AG04449 (cell line): ENCODE measurements at regions of chr6 and their contacts with region 1.

Region 1: DNA sequence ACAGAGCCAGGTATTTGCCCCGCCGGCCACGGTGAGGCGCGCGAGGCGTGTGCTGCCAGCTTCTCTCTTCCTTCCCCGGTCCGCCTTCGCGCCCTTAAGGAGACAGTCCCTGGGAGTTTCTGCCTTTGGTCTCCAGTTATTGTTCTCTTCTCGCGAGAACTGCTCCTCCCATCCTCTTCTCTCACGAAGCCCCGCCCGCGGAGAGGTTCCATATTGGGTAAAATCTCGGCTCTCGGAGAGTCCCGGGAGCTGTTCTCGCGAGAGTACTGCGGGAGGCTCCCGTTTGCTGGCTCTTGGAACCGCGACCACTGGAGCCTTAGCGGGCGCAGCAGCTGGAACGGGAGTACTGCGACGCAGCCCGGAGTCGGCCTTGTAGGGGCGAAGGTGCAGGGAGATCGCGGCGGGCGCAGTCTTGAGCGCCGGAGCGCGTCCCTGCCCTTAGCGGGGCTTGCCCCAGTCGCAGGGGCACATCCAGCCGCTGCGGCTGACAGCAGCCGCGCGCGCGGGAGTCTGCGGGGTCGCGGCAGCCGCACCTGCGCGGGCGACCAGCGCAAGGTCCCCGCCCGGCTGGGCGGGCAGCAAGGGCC is at the start of gene MAPK14:
- DNase-seq: peak; percentile 95
- H3K4me3 ChIP-seq: peak within 1 kb of the TSS; percentile 99
- CTCF ChIP-seq: peak; percentile 92

Region 2: DNA sequence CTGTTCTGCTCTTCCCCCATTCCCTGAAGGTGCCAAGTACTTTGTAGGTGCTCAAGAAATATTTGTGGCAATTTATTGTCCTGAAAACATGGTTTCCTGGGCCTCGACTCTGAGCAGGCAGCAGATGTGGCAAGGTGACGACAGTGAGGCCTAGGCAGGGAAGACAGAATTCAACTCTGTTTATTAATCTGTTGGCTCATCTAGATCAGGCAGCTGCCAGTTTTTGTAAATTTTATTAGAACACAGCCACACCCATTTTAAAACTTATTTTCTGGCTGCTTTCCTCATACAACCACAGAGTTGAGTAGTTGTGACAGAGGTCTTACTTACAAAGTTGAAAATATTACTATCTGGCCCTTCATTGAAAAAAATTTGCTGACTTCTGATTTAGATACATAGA is 24.5 kb after region 1 on chr6:
- CTCF ChIA-PET with region 1: interaction called, 13 read pairs
- POLR2A ChIA-PET with region 1: no interaction called
- DNase-seq: no peak
- H3K4me3 ChIP-seq: no peak overlapping the region
- CTCF ChIP-seq: no peak

Region 3: DNA sequence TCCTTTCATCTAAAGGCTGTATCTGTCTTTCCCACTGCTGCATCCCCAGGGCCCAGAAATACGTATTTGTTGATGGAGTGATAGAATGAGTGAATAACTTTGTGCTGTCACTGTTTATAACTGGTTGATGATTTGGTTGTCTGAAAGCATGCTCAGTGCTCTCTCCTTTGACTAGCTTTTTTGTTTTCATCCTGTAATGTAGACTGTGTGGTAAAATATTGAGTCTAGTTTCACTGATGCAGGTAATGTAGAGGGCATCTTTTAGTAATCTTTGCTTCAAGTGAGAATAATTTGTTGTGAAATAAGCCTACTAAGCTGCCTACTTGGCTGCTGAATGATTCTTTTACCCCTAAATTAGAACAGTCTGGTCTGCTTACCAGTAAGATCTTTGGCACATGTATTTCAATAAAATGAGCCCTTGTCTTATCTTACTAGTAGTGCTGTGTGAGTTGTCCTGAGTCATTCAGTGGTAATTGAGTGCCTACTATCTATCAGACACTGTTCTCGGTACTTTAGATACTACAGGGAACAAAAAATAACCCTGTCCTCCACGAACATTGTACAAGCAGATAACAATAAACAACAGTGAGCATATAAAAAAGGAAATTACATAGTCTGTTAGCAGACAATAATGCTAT is 39.9 kb after region 1 on chr6:
- CTCF ChIA-PET with region 1: interaction called, 14 read pairs
- POLR2A ChIA-PET with region 1: interaction called, 4 read pairs
- DNase-seq: no peak
- H3K4me3 ChIP-seq: no peak overlapping the region
- CTCF ChIP-seq: no peak

Region 4: DNA sequence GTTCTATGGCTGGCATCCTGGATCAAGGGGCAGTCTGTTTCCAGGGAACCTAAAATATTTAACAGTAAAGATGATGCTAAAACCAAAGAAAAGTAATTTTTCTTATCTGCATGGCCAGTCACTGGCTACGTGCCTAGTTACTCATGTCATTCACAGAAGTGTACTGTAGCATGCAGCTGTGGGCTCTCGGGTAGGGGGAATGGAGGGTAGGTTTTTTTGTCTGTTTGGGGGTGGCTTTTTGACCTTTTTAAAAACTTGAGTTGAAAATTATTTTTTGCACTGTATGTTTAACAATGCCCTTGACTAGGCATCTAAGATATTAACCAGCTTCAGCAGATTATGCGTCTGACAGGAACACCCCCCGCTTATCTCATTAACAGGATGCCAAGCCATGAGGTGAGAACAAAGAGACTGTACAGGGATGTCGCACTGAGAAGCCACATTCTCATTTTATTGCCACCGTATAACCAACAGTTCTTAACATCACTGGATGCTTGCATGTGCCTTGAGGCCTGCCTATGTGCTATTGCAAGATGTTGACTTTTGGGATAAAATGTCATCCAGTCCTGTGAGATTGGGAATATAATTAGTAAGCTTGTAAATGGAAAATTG is 72.4 kb after region 1 on chr6:
- CTCF ChIA-PET with region 1: interaction called, 210 read pairs
- POLR2A ChIA-PET with region 1: interaction called, 3 read pairs
- DNase-seq: no peak
- H3K4me3 ChIP-seq: no peak overlapping the region
- CTCF ChIP-seq: no peak

Region 5: DNA sequence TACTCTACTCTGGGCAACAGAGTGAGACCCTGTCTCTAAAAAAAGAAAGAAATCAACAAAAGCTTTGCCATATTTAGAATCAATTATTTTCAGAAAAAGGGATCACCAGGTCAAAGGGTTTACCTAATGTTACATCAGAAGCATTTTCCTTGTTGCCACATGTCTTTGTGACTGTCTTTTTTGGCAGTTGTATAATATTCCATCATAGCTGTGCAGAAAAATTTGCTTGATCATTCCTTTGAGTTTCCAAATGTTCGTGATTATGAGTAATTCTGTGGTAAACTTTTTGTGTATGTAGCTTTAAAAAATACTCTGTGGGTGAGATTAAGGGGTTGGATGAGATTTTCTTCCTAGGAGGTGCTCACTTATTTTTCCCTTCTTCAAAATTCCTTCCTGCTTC is 268.6 kb after region 1 on chr6:
- CTCF ChIA-PET with region 1: no interaction called
- POLR2A ChIA-PET with region 1: no interaction called
- DNase-seq: no peak
- H3K4me3 ChIP-seq: no peak overlapping the region
- CTCF ChIP-seq: no peak

Region 6: GRCh38 chr6:36360241-36361054 is 332.9 kb after region 1 on chr6:
- CTCF ChIA-PET with region 1: interaction called, 10 read pairs
- POLR2A ChIA-PET with region 1: no interaction called
- DNase-seq: no peak
- H3K4me3 ChIP-seq: no peak overlapping the region
- CTCF ChIP-seq: peak; percentile 82

Region 7: GRCh38 chr6:36370638-36371037 is 343.0 kb after region 1 on chr6:
- CTCF ChIA-PET with region 1: no interaction called
- POLR2A ChIA-PET with region 1: no interaction called
- DNase-seq: no peak
- H3K4me3 ChIP-seq: no peak overlapping the region
- CTCF ChIP-seq: no peak